ENCODE measurements at regions of chr7 and their contacts with region 1.

Region 1: GRCh38 chr7:78197447-78197846 is 398.9 kb downstream of the PHTF2 start:
- DNase-seq: peak; percentile 75
- ATAC-seq: peak; percentile 59
- H3K4me3 ChIP-seq: no peak overlapping the region
- H3K27ac ChIP-seq: no peak overlapping the region; the same call in 1 of the 2 replicates
- H3K4me1 ChIP-seq: peaks cover 9% of the 10 kb centered on the region
- H3K27me3 ChIP-seq: no peaks in the 10 kb centered on the region
- CTCF ChIP-seq: no peak
- POLR2A ChIP-seq: no peak
- RAD21 ChIP-seq: no peak

Region 2: GRCh38 chr7:77481615-77482402 is 715.6 kb before region 1 on chr7:
- CTCF ChIA-PET with region 1: no interaction called
- POLR2A ChIA-PET with region 1: interaction called, 10 read pairs
- dilution Hi-C with region 1: no loop called
- in situ Hi-C with region 1: no loop called
- intact Hi-C with region 1: no loop called
- DNase-seq: no peak
- ATAC-seq: no peak
- H3K4me3 ChIP-seq: no peak overlapping the region
- H3K27ac ChIP-seq: no peak overlapping the region
- H3K4me1 ChIP-seq: 0 out of 2 replicates have a peak, but pooled peaks cover 2% of the 10 kb centered on the region
- H3K27me3 ChIP-seq: no peaks in the 10 kb centered on the region
- CTCF ChIP-seq: no peak
- POLR2A ChIP-seq: no peak
- RAD21 ChIP-seq: no peak

Measured in IMR-90 (cell line).